ENCODE measurements at regions of chr6 and their contacts with region 1.

Region 1: DNA sequence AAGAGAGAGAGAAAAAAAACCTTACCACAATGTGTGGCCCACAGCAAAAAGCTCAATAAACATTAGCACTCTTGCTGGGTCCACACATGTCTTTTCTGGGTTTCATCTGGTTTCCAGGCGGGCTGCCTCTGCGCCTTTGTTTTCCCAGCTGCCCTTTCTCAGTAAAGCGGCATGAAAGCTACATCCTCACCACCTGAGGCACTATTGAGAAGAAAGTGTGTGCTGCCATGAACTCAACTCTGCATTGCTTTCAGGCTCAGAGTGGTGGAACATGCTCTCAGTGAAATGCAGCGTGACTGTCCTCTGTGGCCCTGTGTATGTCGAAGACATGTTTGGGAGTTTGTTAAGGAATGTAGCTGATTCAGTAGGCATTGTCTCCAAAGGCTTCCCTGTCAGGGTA is 102.3 kb downstream of the LYRM2 start:
- DNase-seq: no peak
- ATAC-seq: no peak
- H3K4me3 ChIP-seq: no peak overlapping the region
- H3K27ac ChIP-seq: no peak overlapping the region
- H3K4me1 ChIP-seq: no peaks in the 10 kb centered on the region
- H3K27me3 ChIP-seq: no peaks in the 10 kb centered on the region

Region 2: DNA sequence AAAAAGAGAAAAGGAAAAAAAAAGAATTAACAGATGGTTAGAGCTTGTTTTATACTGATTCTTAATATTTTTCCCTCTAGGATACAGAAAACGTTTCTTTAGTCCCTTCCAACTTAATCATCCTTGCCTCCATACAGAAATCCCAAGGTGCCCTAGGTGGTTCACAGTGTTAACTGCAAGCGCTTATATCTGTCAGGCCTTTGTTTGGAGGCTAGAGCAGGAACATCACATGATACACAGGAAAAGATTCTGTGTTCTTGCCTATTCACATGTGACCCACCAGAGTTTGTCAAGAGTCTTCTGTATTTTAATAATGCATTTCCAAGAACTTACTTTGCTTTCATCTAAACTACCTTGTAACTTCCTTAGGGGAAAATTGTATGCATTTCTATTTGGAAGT is 71.9 kb before region 1 on chr6:
- intact Hi-C with region 1: no loop called
- DNase-seq: no peak
- ATAC-seq: no peak
- H3K4me3 ChIP-seq: no peak overlapping the region
- H3K27ac ChIP-seq: no peak overlapping the region
- H3K4me1 ChIP-seq: peaks cover 0 to 3% of the 10 kb centered on the region in 2 donors
- H3K27me3 ChIP-seq: no peaks in the 10 kb centered on the region

Region 3: DNA sequence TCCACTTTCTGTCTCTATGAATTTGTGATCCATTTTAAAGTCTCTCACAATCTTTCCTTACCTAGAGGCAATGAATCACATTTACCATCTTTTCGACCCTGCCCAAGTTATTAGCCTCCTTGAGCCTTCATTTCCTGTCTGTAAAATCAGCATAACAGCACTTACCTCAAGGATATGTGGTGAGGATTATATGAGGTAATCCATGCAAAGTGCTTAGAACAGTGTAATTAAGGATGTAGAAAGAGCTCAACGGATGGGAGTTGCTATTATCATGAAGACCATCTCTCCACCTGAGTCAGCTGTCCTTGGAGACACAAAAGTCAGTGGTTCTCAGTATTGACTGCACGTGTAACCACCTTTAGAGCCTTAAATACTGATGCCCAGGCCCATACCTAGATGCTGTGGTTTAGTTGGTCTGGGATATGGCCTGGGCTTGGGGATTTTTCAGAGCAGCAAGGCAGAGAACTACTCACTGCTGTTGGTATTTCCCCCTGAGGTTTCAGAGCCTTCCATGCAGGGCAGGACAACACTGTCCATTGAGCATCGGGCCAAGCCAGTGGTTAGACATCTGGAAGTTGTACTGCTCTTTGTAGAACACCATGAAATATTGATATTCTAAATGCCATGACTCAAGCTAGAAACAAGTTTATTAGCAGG is 46.6 kb after region 1 on chr6:
- intact Hi-C with region 1: loop called in 1 of 2 experiments (anchors 2 kb)
- DNase-seq: no peak
- ATAC-seq: no peak
- H3K4me3 ChIP-seq: no peak overlapping the region
- H3K27ac ChIP-seq: no peak overlapping the region
- H3K4me1 ChIP-seq: peaks cover 2 to 8% of the 10 kb centered on the region in 2 donors
- H3K27me3 ChIP-seq: no peaks in the 10 kb centered on the region